H1 (cell line): ENCODE measurements at regions of chr2 and their contacts with region 1.

Region 1: DNA sequence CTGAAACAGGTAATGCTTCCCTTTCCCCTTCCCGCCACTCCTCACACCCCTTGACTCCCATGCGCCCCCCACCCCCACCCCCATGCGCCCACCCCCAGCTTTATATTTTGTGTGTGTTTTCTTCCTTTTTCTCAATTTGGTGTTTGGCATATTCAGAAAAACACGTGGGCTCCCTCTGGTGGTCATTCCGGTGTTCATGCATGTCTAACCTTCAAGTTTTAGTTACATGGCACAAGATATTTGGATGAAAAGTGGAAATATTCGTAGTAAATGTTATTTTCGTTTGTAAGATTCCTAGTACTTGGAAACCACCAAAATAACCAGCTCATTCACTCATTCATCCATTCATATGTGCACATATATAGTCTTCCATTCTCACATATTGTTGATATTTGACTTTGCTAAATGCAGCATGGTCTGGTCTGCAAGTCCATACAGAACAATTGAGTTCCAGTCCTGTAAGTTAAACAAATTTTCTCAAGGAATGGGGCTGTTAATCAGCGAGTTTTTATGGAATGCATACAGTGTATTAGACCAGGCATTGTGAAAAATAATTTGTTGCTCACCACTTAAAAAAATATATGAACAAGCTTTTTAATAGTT is 143.6 kb upstream of the MAP3K20 start:
- DNase-seq: peak in 1 of 2 experiments; percentile 61
- H3K4me3 ChIP-seq: no peak overlapping the region
- H3K27ac ChIP-seq: no peak overlapping the region
- H3K4me1 ChIP-seq: peaks cover 2 to 7% (median 6%) of the 10 kb centered on the region in 4 experiments; a peak in 4 of 7 replicates
- H3K27me3 ChIP-seq: no peaks in the 10 kb centered on the region
- CTCF ChIP-seq: peak in 2 of 3 experiments; percentile 69 to 74; a peak in 3 of 4 replicates
- EP300 ChIP-seq: no peak
- POLR2A ChIP-seq: no peak
- RAD21 ChIP-seq: peak; percentile 74 to 80

Region 2: DNA sequence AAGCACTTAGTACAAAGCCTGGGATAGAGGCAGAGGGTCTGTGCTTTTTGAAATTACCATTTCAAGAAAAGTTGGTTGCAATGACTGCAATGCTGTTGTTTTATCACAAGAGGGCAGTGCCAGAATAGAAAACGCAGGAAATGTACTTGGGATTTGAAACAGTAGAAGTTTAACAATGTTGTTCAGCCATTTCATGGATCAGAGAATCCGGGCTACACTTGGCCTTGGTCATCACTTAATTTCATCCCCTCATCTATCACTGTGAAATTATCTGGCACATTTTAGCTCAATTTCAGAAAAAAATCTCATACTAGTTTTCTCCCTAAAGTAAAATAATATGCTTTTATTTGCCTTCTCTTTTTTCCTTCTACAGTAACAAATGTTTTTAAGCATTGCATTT is 125.5 kb before region 1 on chr2:
- CTCF ChIA-PET with region 1: interaction called, 27 read pairs
- POLR2A ChIA-PET with region 1: no interaction called
- DNase-seq: no peak
- H3K4me3 ChIP-seq: no peak overlapping the region
- H3K27ac ChIP-seq: no peak overlapping the region
- H3K4me1 ChIP-seq: no peaks in the 10 kb centered on the region
- H3K27me3 ChIP-seq: no peaks in the 10 kb centered on the region
- CTCF ChIP-seq: peak in 2 of 3 experiments; percentile 67 to 86; a peak in 3 of 4 replicates
- EP300 ChIP-seq: no peak
- POLR2A ChIP-seq: no peak
- RAD21 ChIP-seq: peak; percentile 91 to 93

Region 3: GRCh38 chr2:172864182-172864581 is 67.8 kb before region 1 on chr2:
- CTCF ChIA-PET with region 1: interaction called, 139 read pairs
- POLR2A ChIA-PET with region 1: interaction called, 3 read pairs
- DNase-seq: peak; percentile 43 to 88
- H3K4me3 ChIP-seq: no peak overlapping the region
- H3K27ac ChIP-seq: no peak overlapping the region
- H3K4me1 ChIP-seq: no peaks in the 10 kb centered on the region
- H3K27me3 ChIP-seq: no peaks in the 10 kb centered on the region
- CTCF ChIP-seq: peak; percentile 81 to 97 (median 87)
- EP300 ChIP-seq: no peak
- POLR2A ChIP-seq: no peak
- RAD21 ChIP-seq: peak; percentile 92 to 94

Region 4: DNA sequence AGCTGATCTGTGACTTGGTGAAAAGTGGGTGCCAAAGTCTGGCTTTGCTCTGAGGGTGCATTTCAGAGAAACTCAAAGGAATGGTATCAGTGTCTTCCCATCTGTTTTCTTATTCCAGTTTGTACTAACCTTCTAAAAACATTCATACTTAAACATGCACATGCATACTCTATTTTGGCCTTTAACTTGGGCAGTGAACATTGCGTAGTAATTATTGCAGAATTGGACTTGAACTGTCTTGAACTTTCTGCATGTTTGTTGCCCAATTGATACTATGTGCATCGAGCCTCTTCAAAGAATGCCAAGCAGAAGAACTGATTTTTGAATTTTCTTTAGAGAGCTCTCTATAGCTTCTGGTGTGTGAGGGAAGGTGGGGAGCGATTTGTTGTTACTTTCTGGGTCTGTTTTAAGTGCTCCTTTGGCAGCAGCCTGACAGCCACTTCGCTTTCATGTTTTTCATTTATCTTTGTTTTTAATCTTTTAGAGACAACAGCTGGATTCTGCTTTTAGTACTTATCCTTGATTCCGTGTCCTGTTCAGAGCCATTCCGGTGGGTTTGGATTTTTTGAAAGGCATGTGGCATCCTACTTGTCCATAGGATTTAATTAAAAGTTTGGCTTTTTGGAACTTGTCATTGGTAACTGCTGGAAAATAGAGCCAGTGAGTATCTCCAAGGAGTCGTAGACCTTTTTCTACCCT is 37.2 kb before region 1 on chr2:
- CTCF ChIA-PET with region 1: interaction called, 22 read pairs
- POLR2A ChIA-PET with region 1: no interaction called
- DNase-seq: no peak
- H3K4me3 ChIP-seq: no peak overlapping the region
- H3K27ac ChIP-seq: no peak overlapping the region
- H3K4me1 ChIP-seq: no peaks in the 10 kb centered on the region
- H3K27me3 ChIP-seq: no peaks in the 10 kb centered on the region
- CTCF ChIP-seq: no peak
- EP300 ChIP-seq: no peak
- POLR2A ChIP-seq: no peak
- RAD21 ChIP-seq: no peak

Region 5: DNA sequence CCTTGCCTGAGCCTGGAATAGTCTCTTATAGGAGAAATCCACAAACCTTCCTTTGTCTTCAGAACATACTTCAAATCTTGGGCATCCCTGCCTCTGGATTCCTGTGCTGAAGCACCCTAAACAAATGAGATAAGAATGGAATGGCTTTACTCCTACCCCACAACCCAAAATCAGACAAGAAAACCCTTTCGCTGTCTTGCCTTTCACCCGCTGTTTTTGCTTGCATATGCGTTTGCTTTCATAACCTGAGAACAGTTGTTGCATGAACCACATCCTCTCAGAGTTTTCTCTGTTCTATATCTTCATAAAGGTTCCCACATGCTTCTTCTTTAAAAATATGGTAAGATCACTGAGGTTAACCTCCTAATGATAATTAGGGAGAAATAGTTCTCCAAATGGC is 11.5 kb after region 1 on chr2:
- CTCF ChIA-PET with region 1: interaction called, 16 read pairs
- POLR2A ChIA-PET with region 1: no interaction called
- DNase-seq: no peak
- H3K4me3 ChIP-seq: no peak overlapping the region
- H3K27ac ChIP-seq: no peak overlapping the region
- H3K4me1 ChIP-seq: peaks cover 0 to 8% (median 2%) of the 10 kb centered on the region in 4 experiments; a peak in 2 of 7 replicates
- H3K27me3 ChIP-seq: no peaks in the 10 kb centered on the region
- CTCF ChIP-seq: no peak
- EP300 ChIP-seq: no peak
- POLR2A ChIP-seq: no peak
- RAD21 ChIP-seq: no peak

Region 6: DNA sequence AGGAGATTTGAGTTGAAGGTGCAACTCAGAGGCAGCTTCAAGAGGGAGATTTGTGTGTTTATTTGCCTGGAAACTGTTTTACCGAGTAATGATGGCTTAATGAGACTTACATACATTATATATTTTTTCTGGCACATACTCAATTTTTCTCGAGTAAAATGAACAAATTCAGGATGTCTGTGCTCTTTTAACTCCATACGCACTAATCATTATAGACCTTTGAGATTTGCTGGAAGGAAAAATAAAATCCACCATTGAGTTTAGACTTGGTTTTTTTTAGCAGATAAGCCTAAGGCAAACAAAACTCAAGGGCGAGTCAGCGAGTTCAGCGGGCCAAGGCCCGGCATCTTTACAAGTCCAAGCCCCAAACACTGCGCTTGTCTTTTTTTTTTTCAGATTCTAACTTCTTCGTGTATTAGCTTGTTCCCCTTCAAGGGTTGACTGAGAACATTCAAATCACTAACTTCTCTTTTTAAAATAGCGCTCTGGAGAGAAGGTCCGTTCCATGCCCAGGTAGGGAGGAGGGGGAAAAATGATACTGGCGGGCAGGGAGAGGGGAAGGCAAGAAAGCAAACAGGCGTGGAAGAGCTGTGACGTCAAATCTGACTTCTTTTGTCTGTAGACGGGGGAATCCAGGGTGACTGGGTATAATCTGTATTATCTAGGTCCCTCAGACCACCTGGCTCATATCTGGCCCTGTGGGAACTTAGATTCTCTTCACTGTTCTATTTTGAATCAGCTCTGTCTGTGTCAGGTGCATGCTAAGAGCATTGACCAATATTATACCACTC is 70.9 kb after region 1 on chr2:
- CTCF ChIA-PET with region 1: no interaction called
- POLR2A ChIA-PET with region 1: no interaction called
- DNase-seq: no peak
- H3K4me3 ChIP-seq: no peak overlapping the region
- H3K27ac ChIP-seq: no peak overlapping the region
- H3K4me1 ChIP-seq: peaks cover 0 to 4% (median 0%) of the 10 kb centered on the region in 4 experiments; a peak in 2 of 7 replicates
- H3K27me3 ChIP-seq: no peaks in the 10 kb centered on the region
- CTCF ChIP-seq: no peak
- EP300 ChIP-seq: no peak
- POLR2A ChIP-seq: no peak
- RAD21 ChIP-seq: no peak